ENCODE measurements at regions of chr11 and their contacts with region 1.

Region 1: DNA sequence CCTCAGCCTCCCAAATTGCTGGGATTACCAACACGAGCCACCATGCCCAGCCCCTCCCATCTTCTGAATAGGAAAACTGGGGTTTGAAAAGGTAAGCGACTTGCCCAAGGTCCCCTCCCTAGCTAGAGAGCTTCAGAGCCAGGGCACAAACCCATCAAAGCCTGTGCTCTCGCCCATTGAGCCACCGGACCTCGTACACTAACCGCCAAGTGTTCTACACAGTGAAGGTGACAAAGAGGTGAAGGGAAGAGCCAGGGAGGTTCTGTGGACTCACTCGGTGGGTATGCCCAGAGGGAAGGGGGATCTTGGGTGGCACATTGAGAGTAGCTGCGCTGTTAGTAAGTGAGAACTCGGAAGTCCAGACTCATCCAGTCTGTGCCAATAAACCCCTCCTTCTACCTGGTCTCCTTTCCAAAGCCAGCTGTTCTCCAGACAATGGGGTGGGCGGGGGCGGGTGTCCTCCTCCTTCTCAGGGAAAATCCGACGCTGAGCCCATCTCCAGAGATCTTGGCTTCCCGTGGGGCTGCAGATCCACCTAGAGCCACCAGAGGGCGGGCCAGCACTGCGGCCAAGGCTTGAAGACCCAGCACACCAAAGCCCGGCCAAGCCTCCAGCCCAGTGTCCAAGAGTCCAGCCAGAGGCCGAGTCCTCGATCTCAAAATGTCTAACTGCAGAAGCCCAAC is 3.2 kb upstream of the RTN4RL2 start:
- DNase-seq: peak; percentile 41 to 77 (median 62)
- ATAC-seq: peak; percentile 83
- H3K4me3 ChIP-seq: no peak overlapping the region
- H3K4me3 Mint-ChIP-seq: peak overlapping the region; percentile 54 to 99 (median 74)
- H3K27ac ChIP-seq: no peak overlapping the region
- H3K27ac Mint-ChIP-seq: peak overlapping the region in 1 of 9 donors; percentile 83
- H3K4me1 ChIP-seq: peaks cover 26% of the 10 kb centered on the region in 2 donors
- H3K4me1 Mint-ChIP-seq: peaks cover 17 to 33% (median 26%) of the 10 kb centered on the region in 7 donors
- H3K27me3 ChIP-seq: peaks cover 12% of the 10 kb centered on the region in 2 donors
- H3K27me3 Mint-ChIP-seq: peaks cover 22 to 56% (median 32%) of the 10 kb centered on the region in 5 donors

Region 2: DNA sequence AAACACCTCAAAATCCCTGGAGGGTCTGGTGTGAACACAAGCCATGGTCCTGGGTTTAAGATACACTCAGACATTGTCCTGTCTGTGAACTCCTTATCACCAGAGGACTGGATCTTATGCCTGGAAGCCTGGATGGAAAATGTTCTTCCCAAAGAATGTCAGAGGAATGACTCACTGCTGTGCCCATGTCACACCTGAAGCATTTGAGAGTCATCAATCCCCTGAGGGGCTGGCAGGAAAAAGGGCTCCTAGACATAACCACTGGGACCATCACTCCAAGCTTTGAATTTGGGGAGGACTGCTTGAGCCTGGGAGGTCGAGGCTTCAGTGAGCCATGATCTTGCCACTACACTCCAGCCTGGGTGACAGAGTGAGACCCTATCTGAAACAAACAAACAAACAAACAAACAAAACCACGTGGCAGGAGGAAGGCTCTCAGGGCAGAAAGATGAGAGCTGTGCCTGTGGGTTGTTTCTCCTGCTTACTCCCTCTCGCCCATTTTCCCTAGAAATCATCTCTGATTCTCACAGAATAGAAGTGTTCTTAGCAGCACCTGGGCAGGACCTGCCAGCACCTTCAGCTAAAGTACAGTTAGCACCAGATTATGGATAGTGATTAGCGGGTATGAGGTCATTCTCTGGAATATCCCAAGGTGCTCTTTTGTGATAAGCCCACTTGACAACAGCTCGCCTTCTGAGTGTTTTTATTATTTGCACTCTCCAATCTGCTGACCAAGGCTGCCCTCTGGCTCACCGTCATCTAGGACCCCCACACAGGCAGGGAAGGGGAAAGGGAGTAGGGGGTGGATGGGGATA is 54.7 kb before region 1 on chr11:
- CTCF ChIA-PET with region 1: no interaction called
- POLR2A ChIA-PET with region 1: no interaction called
- intact Hi-C with region 1: no loop called
- DNase-seq: no peak
- ATAC-seq: no peak
- H3K4me3 ChIP-seq: no peak overlapping the region
- H3K4me3 Mint-ChIP-seq: no peak overlapping the region
- H3K27ac ChIP-seq: no peak overlapping the region
- H3K27ac Mint-ChIP-seq: no peak overlapping the region
- H3K4me1 ChIP-seq: no peaks in the 10 kb centered on the region
- H3K4me1 Mint-ChIP-seq: peaks cover 0 to 17% (median 7%) of the 10 kb centered on the region in 7 donors
- H3K27me3 ChIP-seq: no peaks in the 10 kb centered on the region
- H3K27me3 Mint-ChIP-seq: no peaks in the 10 kb centered on the region

Region 3: GRCh38 chr11:57426929-57427726 is 30.0 kb before region 1 on chr11 and contains the start of gene SLC43A3:
- CTCF ChIA-PET with region 1: interaction called, 17 read pairs
- POLR2A ChIA-PET with region 1: interaction called, 3 read pairs
- intact Hi-C with region 1: loop called (anchors 1 to 2 kb)
- DNase-seq: peak; percentile 18 to 79 (median 38)
- ATAC-seq: peak; percentile 63
- H3K4me3 ChIP-seq: peak within 1 kb of the TSS; percentile 56
- H3K4me3 Mint-ChIP-seq: peak within 1 kb of the TSS; percentile 83 to 92 (median 89)
- H3K27ac ChIP-seq: peak within 1 kb of the TSS; percentile 62
- H3K27ac Mint-ChIP-seq: peak within 1 kb of the TSS; percentile 52 to 93 (median 82)
- H3K4me1 ChIP-seq: peaks cover 24 to 36% of the 10 kb centered on the region in 2 donors
- H3K4me1 Mint-ChIP-seq: peaks cover 40 to 55% (median 50%) of the 10 kb centered on the region in 7 donors
- H3K27me3 ChIP-seq: no peaks in the 10 kb centered on the region
- H3K27me3 Mint-ChIP-seq: peaks cover 0 to 24% (median 0%) of the 10 kb centered on the region in 5 donors
- total RNA-seq, gene SLC43A3: 10.5 to 67.9 (median 12.2) TPM

Region 4: GRCh38 chr11:57474017-57474802 is 17.1 kb after region 1 on chr11:
- CTCF ChIA-PET with region 1: interaction called, 104 read pairs
- POLR2A ChIA-PET with region 1: interaction called, 4 read pairs
- intact Hi-C with region 1: no loop called
- DNase-seq: peak in 5 of 9 donors; percentile 40 to 54 (median 48)
- ATAC-seq: peak; percentile 67
- H3K4me3 ChIP-seq: peak overlapping the region; percentile 40
- H3K4me3 Mint-ChIP-seq: peak overlapping the region; percentile 40 to 84 (median 65)
- H3K27ac ChIP-seq: no peak overlapping the region
- H3K27ac Mint-ChIP-seq: peak overlapping the region in 7 of 9 donors; percentile 39 to 91 (median 72)
- H3K4me1 ChIP-seq: peaks cover 10 to 27% of the 10 kb centered on the region in 2 donors
- H3K4me1 Mint-ChIP-seq: peaks cover 12 to 42% (median 29%) of the 10 kb centered on the region in 7 donors
- H3K27me3 ChIP-seq: no peaks in the 10 kb centered on the region
- H3K27me3 Mint-ChIP-seq: peaks cover 0 to 49% (median 5%) of the 10 kb centered on the region in 5 donors

Region 5: DNA sequence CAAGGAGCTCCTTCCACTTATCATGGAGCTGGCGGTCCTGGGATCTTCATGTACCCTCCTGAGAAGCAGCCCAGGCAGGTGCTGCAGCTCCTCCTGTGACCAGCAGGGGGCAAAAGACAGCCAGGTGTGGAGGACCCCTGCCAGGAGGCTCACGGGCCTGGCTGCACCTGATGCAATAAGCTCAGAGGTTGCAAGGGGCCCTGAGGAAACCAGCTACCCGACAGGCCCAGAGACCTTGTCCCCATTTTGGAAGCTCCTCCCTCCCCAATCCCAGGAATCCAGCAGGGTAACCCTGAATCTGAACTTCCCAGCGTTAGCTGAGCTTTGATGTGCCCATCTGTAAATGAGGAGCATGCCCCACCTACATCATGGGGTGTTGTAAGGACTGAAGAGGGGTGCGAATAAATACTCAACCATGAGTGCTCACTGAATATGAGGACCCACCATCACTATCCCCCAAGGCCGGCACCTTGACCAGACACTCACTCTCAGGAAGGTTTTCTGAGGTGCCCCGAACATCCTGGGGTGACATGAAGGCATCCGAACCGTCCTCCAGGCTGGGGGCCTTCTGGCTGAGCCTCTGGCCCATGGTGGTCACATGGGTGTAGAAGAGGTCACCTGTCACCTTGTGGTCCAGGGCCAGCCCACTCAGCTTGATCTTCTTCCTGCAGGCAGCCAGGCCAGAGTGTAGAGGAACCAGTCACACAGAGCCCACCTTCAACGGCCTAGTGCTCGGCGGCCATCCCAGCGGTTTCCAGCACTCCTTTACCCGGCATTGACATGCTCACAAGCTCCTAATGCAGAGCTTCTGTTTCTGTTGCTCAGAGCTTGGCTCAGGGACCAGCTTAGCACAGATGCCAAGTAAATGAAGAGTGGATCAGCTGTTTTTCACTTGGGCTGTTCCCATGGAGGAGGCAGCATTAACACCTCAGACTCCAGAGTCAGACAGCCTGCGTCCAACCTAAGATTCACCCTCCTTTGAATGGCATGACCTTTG is 36.7 kb after region 1 on chr11:
- CTCF ChIA-PET with region 1: interaction called, 39 read pairs
- POLR2A ChIA-PET with region 1: no interaction called
- intact Hi-C with region 1: loop called in 1 of 2 experiments (anchors 5 kb)
- DNase-seq: peak; percentile 51 to 77 (median 67)
- ATAC-seq: peak; percentile 89
- H3K4me3 ChIP-seq: no peak overlapping the region
- H3K4me3 Mint-ChIP-seq: no peak overlapping the region
- H3K27ac ChIP-seq: no peak overlapping the region
- H3K27ac Mint-ChIP-seq: peak overlapping the region in 1 of 9 donors; percentile 5
- H3K4me1 ChIP-seq: peaks cover 0 to 3% of the 10 kb centered on the region in 2 donors
- H3K4me1 Mint-ChIP-seq: peaks cover 0 to 11% (median 0%) of the 10 kb centered on the region in 7 donors
- H3K27me3 ChIP-seq: no peaks in the 10 kb centered on the region
- H3K27me3 Mint-ChIP-seq: peaks cover 0 to 3% (median 0%) of the 10 kb centered on the region in 5 donors

Region 6: GRCh38 chr11:57644748-57645688 is 187.9 kb after region 1 on chr11:
- CTCF ChIA-PET with region 1: interaction called, 30 read pairs
- POLR2A ChIA-PET with region 1: no interaction called
- intact Hi-C with region 1: loop called (anchors 1 kb)
- DNase-seq: peak; percentile 61 to 91 (median 85)
- ATAC-seq: peak; percentile 87
- H3K4me3 ChIP-seq: no peak overlapping the region
- H3K4me3 Mint-ChIP-seq: no peak overlapping the region
- H3K27ac ChIP-seq: no peak overlapping the region
- H3K27ac Mint-ChIP-seq: peak overlapping the region in 2 of 9 donors; percentile 36 to 56
- H3K4me1 ChIP-seq: peaks cover 11 to 14% of the 10 kb centered on the region in 2 donors
- H3K4me1 Mint-ChIP-seq: peaks cover 25 to 60% (median 41%) of the 10 kb centered on the region in 7 donors
- H3K27me3 ChIP-seq: peaks cover 10 to 18% of the 10 kb centered on the region in 2 donors
- H3K27me3 Mint-ChIP-seq: peaks cover 30 to 60% (median 47%) of the 10 kb centered on the region in 5 donors

Region 7: GRCh38 chr11:57713835-57714234 is 256.7 kb after region 1 on chr11:
- CTCF ChIA-PET with region 1: no interaction called
- POLR2A ChIA-PET with region 1: no interaction called
- intact Hi-C with region 1: no loop called
- DNase-seq: no peak
- ATAC-seq: no peak
- H3K4me3 ChIP-seq: peak overlapping the region; percentile 98
- H3K4me3 Mint-ChIP-seq: peak overlapping the region; percentile 86 to 99 (median 98)
- H3K27ac ChIP-seq: peak overlapping the region; percentile 85
- H3K27ac Mint-ChIP-seq: peak overlapping the region in 8 of 9 donors; percentile 51 to 98 (median 89)
- H3K4me1 ChIP-seq: peaks cover 25 to 33% of the 10 kb centered on the region in 2 donors
- H3K4me1 Mint-ChIP-seq: peaks cover 14 to 64% (median 42%) of the 10 kb centered on the region in 7 donors
- H3K27me3 ChIP-seq: no peaks in the 10 kb centered on the region
- H3K27me3 Mint-ChIP-seq: no peaks in the 10 kb centered on the region

Region 8: DNA sequence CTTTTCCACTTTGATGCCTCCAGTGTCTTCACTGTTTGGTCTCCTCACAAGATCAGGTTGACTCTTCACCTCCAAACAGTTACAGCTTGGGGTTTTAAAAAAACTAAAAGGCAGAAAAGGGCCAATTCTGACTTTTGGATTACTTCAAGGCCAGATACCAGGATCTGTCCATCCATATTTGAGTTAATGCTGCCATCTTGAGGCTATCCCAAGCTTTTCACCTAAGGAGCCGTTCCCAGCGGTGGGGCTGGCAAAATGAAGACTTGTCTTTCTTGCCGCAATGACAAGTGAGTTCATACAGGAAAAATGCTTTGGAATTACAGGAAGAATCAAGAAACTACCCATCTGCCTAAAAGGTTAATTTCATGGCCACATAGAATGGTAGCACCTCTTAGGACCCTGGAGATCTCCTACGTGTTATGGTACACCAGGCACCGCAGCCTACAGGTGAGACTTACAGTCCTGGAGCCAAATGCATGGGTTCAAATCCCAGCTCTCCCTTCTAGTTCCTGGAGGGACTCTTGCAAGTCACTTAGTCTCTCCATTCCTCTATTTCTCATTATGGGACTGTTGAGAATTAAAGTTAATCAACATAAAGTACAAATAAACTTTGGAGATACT is 1056.8 kb after region 1 on chr11:
- CTCF ChIA-PET with region 1: no interaction called
- POLR2A ChIA-PET with region 1: no interaction called
- intact Hi-C with region 1: loop called in 1 of 2 experiments (anchors 1 kb)
- DNase-seq: peak in 3 of 9 donors; percentile 17 to 29 (median 20)
- ATAC-seq: peak; percentile 40
- H3K4me3 ChIP-seq: no peak overlapping the region
- H3K4me3 Mint-ChIP-seq: no peak overlapping the region
- H3K27ac ChIP-seq: no peak overlapping the region
- H3K27ac Mint-ChIP-seq: peak overlapping the region in 2 of 9 donors; percentile 19 to 63
- H3K4me1 ChIP-seq: no peaks in the 10 kb centered on the region
- H3K4me1 Mint-ChIP-seq: peaks cover 0 to 14% (median 0%) of the 10 kb centered on the region in 7 donors
- H3K27me3 ChIP-seq: no peaks in the 10 kb centered on the region
- H3K27me3 Mint-ChIP-seq: no peaks in the 10 kb centered on the region